ENCODE measurements at regions of chr6 and their contacts with region 1.

Region 1: GRCh38 chr6:38871741-38872568 is 156.8 kb downstream of the DNAH8 start:
- DNase-seq: peak; percentile 11 to 66 (median 38)
- ATAC-seq: peak; percentile 52
- H3K4me3 ChIP-seq: no peak overlapping the region
- H3K4me3 Mint-ChIP-seq: no peak overlapping the region
- H3K27ac ChIP-seq: no peak overlapping the region
- H3K27ac Mint-ChIP-seq: peak overlapping the region in 1 of 9 donors; percentile 4
- H3K4me1 ChIP-seq: peaks cover 9 to 23% of the 10 kb centered on the region in 2 donors
- H3K4me1 Mint-ChIP-seq: peaks cover 10 to 47% (median 24%) of the 10 kb centered on the region in 7 donors
- H3K27me3 ChIP-seq: no peaks in the 10 kb centered on the region
- H3K27me3 Mint-ChIP-seq: peaks cover 0 to 10% (median 7%) of the 10 kb centered on the region in 5 donors

Region 2: GRCh38 chr6:37353761-37354525 is 1518.0 kb before region 1 on chr6 and contains the start of gene RNF8:
- CTCF ChIA-PET with region 1: no interaction called
- POLR2A ChIA-PET with region 1: no interaction called
- intact Hi-C with region 1: loop called in 1 of 2 experiments (anchors 5 kb)
- DNase-seq: peak; percentile 72 to 92 (median 84)
- ATAC-seq: peak; percentile 96
- H3K4me3 ChIP-seq: peak within 1 kb of the TSS; percentile 94
- H3K4me3 Mint-ChIP-seq: peak within 1 kb of the TSS; percentile 90 to 98 (median 95)
- H3K27ac ChIP-seq: peak within 1 kb of the TSS; percentile 79
- H3K27ac Mint-ChIP-seq: peak within 1 kb of the TSS; percentile 81 to 93 (median 88)
- H3K4me1 ChIP-seq: peaks cover 7 to 14% of the 10 kb centered on the region in 2 donors
- H3K4me1 Mint-ChIP-seq: peaks cover 21 to 49% (median 37%) of the 10 kb centered on the region in 7 donors
- H3K27me3 ChIP-seq: no peaks in the 10 kb centered on the region
- H3K27me3 Mint-ChIP-seq: no peaks in the 10 kb centered on the region
- total RNA-seq, gene RNF8: 7.1 to 26.0 (median 15.8) TPM

Region 3: DNA sequence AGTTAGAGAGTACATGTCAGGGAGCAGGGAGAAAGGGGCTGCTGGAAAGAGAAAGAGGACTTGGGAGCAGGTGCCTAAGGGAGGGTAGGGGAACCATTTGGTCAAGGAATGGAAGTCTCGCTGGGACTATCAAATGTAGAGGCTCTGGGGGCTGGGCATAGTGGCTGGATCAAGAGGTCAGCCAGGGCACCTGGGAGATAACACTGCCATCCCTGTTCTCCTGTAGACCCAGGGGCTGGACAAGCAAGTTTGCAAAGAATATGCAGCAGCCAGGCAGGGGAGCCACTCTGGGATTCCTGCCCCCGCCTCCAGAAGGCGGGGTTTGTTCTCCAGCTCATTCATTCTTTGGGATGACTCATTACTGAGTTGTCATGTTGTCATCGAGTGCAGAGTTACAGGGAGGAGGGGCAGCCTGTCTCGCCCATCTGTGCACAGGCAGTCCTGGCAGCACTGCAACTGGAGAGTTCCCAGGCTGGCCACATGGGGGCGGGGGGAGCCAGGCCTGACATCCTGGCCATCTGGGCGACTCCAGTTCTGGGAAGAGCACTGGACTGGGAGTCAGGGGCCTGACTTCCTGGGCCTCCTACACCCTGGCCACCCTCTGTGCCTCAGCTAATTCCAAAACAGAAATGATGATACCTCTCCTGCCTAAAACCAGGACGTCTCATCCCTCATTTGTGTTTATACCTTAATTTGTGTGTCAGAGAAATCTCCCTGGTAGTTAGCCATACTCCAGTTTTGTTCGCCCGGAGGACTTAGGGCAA is 1080.6 kb before region 1 on chr6:
- CTCF ChIA-PET with region 1: no interaction called
- POLR2A ChIA-PET with region 1: no interaction called
- intact Hi-C with region 1: no loop called
- DNase-seq: peak; percentile 29 to 83 (median 59)
- ATAC-seq: peak; percentile 99
- H3K4me3 ChIP-seq: no peak overlapping the region
- H3K4me3 Mint-ChIP-seq: no peak overlapping the region
- H3K27ac ChIP-seq: no peak overlapping the region
- H3K27ac Mint-ChIP-seq: no peak overlapping the region
- H3K4me1 ChIP-seq: no peaks in the 10 kb centered on the region
- H3K4me1 Mint-ChIP-seq: peaks cover 0 to 11% (median 0%) of the 10 kb centered on the region in 7 donors
- H3K27me3 ChIP-seq: no peaks in the 10 kb centered on the region
- H3K27me3 Mint-ChIP-seq: peaks cover 0 to 10% (median 0%) of the 10 kb centered on the region in 5 donors

Region 4: DNA sequence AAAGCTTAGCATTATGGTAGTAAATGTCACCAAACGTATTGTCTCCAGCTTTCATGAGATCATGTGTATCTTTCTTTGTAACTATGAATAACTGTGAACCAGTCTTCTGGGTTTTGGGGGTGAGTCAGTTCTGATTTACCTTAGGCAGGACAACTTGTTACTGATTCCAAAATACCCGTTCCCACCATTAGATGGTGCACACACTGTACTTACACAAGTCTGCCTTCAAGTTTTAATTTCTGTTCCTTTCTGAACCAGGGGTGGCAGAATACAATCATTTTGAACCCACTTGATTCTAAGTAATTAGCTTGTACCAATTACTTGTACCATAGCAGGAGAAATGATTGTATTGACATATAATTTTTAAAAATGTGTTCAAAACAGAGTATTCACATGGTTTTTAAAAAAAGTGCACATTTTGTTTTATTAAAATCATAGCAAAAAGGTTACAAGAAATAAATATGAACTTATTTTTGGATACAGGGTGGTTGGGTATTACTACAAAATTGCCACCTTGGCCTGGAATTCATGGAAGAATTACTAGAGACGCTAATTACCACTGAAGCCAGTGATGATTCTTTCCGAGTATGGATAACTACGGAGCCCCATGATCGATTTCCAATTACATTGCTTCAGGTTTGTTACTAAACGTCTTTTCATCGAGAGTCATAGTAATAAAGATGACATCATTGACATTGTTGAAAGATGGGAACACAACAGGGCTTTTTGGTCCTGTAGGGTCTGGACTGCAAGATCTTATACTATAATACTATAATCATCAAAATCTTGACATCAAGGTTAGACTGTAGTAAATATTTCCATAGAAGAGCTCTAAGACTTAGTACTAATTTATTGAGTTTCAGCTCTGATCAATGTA is 101.5 kb after region 1 on chr6:
- CTCF ChIA-PET with region 1: interaction called, 6 read pairs
- POLR2A ChIA-PET with region 1: no interaction called
- intact Hi-C with region 1: loop called in 1 of 2 experiments (anchors 1 kb)
- DNase-seq: peak in 6 of 9 donors; percentile 22 to 36 (median 32)
- ATAC-seq: peak; percentile 77
- H3K4me3 ChIP-seq: no peak overlapping the region
- H3K4me3 Mint-ChIP-seq: no peak overlapping the region
- H3K27ac ChIP-seq: no peak overlapping the region
- H3K27ac Mint-ChIP-seq: no peak overlapping the region
- H3K4me1 ChIP-seq: no peaks in the 10 kb centered on the region
- H3K4me1 Mint-ChIP-seq: no peaks in the 10 kb centered on the region
- H3K27me3 ChIP-seq: peaks cover 0 to 3% of the 10 kb centered on the region in 2 donors
- H3K27me3 Mint-ChIP-seq: peaks cover 0 to 52% (median 18%) of the 10 kb centered on the region in 5 donors

Region 5: DNA sequence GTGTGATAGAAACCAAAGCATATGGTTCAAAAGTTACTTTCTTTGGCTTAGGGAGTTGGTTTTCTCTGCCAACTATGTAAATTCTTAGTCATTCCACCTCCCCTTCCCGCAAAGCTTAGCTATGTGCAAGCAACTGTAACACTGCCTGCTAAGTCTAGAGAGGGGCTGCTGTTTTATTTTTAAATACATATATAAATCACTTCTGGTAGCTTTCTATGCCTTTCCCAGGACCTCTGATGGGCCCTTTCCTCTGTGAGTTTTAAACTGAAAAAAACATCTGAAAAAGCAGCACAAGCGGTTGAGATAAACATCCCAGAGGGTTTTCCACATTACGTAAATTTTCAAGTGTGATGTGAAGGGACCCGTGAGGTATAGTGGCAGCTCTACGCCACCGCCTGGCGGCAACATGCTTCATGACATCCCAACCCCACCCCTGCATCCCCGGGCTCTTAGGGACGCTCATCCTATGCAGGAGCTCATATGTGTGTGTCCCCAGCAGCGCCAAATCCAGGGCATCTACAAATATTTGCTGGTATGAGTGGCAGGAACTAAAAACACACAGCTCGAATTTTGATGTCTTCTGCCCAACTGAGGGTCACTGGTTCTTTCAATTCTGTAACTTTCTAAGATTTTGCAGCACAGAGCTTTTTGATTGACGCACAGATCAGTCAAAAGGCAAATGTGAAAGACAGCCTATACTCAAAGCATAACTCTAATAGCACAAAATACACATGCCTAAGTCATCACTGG is 230.3 kb after region 1 on chr6:
- CTCF ChIA-PET with region 1: interaction called, 8 read pairs
- POLR2A ChIA-PET with region 1: no interaction called
- intact Hi-C with region 1: loop called (anchors 1 to 5 kb)
- DNase-seq: peak in 1 of 9 donors; percentile 20
- ATAC-seq: peak; percentile 62
- H3K4me3 ChIP-seq: no peak overlapping the region
- H3K4me3 Mint-ChIP-seq: no peak overlapping the region
- H3K27ac ChIP-seq: no peak overlapping the region
- H3K27ac Mint-ChIP-seq: peak overlapping the region in 1 of 9 donors; percentile 15
- H3K4me1 ChIP-seq: peaks cover 0 to 5% of the 10 kb centered on the region in 2 donors
- H3K4me1 Mint-ChIP-seq: peaks cover 12 to 35% (median 16%) of the 10 kb centered on the region in 7 donors
- H3K27me3 ChIP-seq: no peaks in the 10 kb centered on the region
- H3K27me3 Mint-ChIP-seq: peaks cover 0 to 10% (median 0%) of the 10 kb centered on the region in 5 donors

Region 6: GRCh38 chr6:39302669-39303424 is 430.9 kb after region 1 on chr6:
- CTCF ChIA-PET with region 1: interaction called, 26 read pairs
- POLR2A ChIA-PET with region 1: interaction called, 4 read pairs
- intact Hi-C with region 1: loop called (anchors 1 kb)
- DNase-seq: peak; percentile 60 to 86 (median 79)
- ATAC-seq: peak; percentile 94
- H3K4me3 ChIP-seq: peak overlapping the region; percentile 45
- H3K4me3 Mint-ChIP-seq: peak overlapping the region; percentile 28 to 86 (median 76)
- H3K27ac ChIP-seq: no peak overlapping the region
- H3K27ac Mint-ChIP-seq: peak overlapping the region in 3 of 9 donors; percentile 16 to 48 (median 18)
- H3K4me1 ChIP-seq: no peaks in the 10 kb centered on the region
- H3K4me1 Mint-ChIP-seq: peaks cover 0 to 9% (median 4%) of the 10 kb centered on the region in 7 donors
- H3K27me3 ChIP-seq: no peaks in the 10 kb centered on the region
- H3K27me3 Mint-ChIP-seq: peaks cover 0 to 6% (median 0%) of the 10 kb centered on the region in 5 donors